ENCODE measurements at regions of chr5 and their contacts with region 1.

Region 1: DNA sequence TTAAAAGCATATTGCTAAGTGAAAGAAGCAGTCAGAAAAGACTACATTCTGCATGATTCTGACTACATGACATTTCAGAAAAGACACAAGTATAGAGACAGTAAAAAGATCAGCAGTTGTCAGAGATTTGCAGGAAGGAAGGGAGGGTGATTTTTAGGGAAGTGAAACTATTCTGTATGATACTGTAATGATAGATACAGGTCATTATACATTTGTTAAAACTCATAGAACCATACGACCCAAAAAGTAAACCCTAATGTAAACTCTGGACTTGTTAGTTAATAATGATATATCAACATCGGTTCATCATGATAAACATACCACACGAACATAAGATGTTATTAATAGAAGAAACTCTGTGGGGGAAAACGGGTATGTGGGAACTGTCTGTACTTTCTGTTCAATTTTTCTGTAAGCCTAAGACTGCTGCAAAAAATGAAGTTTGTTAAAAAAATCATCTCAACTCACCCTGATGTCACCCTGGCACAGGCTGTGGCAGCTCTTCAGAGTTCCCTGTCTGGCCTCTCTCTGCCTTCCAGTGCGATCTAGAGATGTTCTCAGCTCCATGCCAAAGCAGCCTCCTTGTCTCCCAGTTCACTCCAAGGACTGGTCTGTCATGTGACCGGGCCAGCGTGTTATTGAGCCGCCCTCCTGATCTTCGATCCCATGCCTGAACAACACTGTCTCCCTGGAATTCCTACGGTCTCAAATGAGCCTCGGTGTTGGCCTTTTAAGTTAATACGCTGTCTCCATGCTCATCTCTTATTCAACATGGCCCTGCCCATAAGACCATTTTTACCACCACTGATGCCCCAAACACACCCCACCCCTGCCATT is 35.4 kb downstream of the PRLR start:
- H3K4me3 ChIP-seq: no peak overlapping the region
- H3K27ac ChIP-seq: no peak overlapping the region
- H3K4me1 ChIP-seq: peaks cover 12% of the 10 kb centered on the region
- CTCF ChIP-seq: no peak

Region 2: DNA sequence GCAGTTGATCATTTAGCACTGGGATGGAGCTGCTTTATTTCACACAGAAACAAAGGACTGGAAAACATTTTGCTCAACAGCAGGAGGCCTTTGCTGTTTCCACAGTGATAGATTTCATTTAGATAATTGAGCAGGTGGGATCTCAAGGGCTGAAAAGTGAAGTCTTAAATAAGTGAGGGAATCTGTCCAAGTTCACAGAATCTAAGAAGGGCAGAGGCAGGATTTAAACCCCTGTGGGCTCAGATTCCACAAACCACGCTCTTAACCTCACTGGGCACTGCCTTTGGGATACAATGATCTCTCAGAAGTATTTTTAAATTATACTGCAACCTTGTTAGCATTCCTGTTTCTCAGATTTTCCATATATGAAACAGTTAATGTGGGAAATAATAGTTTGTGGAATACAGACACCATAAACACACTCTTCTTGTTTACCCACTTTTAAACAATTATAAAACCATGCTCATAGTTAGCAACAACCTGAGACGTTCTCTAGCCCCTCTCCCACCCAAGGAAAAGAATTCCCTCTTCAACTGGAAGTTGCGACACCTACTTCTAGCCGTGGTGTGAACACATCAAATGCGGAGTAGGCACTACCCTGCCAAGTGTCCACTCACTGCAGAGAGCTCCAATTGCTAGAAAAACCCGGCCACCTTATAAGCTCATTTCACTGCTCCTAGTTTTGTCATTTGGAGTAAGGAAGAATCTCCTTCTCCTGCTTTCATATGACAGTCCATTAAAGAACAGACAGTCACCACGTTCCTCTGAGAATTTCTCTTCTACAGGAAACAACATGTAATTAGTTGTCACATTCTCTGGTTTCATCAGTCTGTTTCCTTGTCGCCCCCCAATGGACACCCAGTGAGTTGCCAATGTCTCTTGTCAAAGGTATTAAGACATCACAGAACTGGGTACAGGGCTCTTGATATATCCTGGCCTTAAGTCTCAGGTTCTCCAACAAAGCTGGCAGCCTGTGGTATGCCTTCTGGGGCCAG is 12.0 kb before region 1 on chr5:
- CTCF ChIA-PET with region 1: interaction called, 21 read pairs
- POLR2A ChIA-PET with region 1: no interaction called
- H3K4me3 ChIP-seq: no peak overlapping the region
- H3K27ac ChIP-seq: no peak overlapping the region
- H3K4me1 ChIP-seq: no peaks in the 10 kb centered on the region
- CTCF ChIP-seq: no peak

Measured in HEK293 (cell line).